ENCODE measurements at regions of chr19 and their contacts with region 1.

Region 1: DNA sequence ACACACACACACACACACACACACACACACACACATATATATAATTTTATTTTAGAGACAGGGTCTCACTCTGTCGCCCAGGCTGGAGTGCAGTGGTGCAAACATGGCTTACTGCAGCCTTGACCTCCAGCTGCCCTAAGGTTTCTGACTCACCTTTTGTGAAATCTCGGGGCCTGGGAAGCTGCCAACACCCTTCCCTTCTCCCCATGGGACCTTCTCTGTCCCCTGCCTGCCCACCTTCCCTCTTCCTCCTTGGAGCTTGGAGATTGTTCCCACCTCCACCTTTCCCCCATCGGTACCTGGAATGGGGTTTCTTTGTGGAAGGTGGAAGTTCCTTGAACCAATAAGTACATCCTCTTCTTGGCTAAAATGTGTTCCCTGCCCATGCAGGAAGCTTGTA is 6.3 kb downstream of the ARRDC5 start:
- DNase-seq: peak; percentile 53 to 63
- H3K4me3 ChIP-seq: no peak overlapping the region
- H3K27ac ChIP-seq: peak overlapping the region; percentile 80
- H3K4me1 ChIP-seq: peaks cover 15% of the 10 kb centered on the region
- H3K27me3 ChIP-seq: no peaks in the 10 kb centered on the region
- CTCF ChIP-seq: no peak

Region 2: GRCh38 chr19:4916292-4917082 is 20.1 kb after region 1 on chr19:
- CTCF ChIA-PET with region 1: interaction called, 14 read pairs
- POLR2A ChIA-PET with region 1: no interaction called
- intact Hi-C with region 1: no loop called
- DNase-seq: no peak
- H3K4me3 ChIP-seq: no peak overlapping the region
- H3K27ac ChIP-seq: no peak overlapping the region
- H3K4me1 ChIP-seq: peaks cover 40% of the 10 kb centered on the region
- H3K27me3 ChIP-seq: no peaks in the 10 kb centered on the region
- CTCF ChIP-seq: no peak